GM23248 (cell line): ENCODE measurements at regions of chr10 and their contacts with region 1.

Region 1: DNA sequence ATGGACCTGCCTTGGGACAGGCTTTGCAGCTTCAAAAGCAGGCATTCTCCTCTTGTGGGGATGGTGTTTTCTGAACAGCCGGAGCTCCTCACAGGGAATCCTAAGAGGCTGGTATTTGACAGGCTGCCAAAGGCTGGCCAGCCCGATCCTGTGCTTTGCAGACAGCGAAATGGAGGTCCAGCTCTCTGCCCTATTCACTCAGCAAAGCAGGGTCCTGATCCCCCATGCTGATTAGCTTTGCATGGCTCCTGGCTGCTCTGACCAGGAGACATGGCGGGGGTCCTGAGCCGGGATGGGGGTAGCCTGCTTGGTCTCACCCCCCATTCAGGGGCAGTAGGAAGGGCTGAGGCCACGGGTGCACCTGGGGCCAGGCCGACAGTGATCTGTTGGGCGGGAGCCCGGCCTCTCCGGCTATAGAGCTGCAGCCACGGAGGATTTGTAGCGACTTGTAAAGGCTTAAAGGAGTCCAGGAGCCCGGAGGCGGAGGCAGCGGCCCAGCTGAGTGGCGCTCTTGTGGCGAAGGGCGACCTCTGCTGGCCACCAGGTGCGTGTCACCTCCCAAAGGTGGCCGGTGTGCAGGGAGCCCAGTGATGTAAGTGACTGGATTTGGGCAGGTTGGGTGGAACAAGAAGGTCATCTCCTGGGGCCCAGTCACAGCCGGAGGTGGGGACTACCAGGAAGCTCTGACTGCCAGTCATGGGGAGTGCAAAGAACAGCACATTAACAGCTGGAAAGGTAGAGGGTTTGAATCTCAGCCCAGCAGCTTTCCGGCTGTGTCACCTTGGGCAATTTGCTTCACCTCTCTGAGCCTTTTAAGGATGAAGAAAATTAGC is 126.5 kb downstream of the ZMIZ1 start:
- DNase-seq: peak; percentile 91
- H3K4me3 ChIP-seq: no peak overlapping the region
- H3K27ac ChIP-seq: peak overlapping the region; percentile 53
- H3K4me1 ChIP-seq: peaks cover 34% of the 10 kb centered on the region
- H3K27me3 ChIP-seq: no peaks in the 10 kb centered on the region

Region 2: DNA sequence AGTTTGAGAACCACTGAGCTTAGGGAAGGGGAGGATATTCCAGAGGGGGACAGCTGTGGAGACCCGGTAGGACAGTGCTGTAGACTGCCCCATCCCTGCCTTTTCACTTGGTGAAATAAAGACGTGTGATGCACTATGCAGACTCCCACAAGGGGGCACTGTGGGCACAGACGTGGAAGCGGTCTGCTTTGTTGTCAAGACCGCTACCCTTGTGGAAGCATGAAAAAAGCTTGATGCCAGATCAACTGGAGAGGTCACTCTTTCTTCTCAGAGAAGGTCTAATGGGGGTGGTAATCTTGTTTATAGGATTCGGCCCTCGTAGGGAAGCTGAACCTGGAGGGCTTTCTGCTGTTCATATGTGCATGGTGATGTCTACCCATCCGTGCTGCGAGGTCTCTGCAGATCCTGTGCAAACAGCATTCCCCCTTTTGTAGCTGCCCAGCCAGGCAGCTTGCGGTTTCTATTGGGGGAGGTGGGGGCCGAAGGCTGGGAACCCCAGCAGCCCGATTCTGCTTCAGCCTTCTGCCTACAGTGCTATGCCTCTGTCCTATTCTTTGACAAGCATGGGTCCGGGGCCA is 1147.9 kb before region 1 on chr10:
- in situ Hi-C with region 1: loop called (anchors 10 kb)
- DNase-seq: peak; percentile 87
- H3K4me3 ChIP-seq: no peak overlapping the region
- H3K27ac ChIP-seq: no peak overlapping the region
- H3K4me1 ChIP-seq: peaks cover 24% of the 10 kb centered on the region
- H3K27me3 ChIP-seq: no peaks in the 10 kb centered on the region

Region 3: GRCh38 chr10:78727728-78728127 is 467.6 kb before region 1 on chr10:
- in situ Hi-C with region 1: no loop called
- DNase-seq: no peak
- H3K4me3 ChIP-seq: no peak overlapping the region
- H3K27ac ChIP-seq: no peak overlapping the region
- H3K4me1 ChIP-seq: no peaks in the 10 kb centered on the region
- H3K27me3 ChIP-seq: peaks cover 16% of the 10 kb centered on the region

Region 4: GRCh38 chr10:79069325-79070080 is 125.8 kb before region 1 on chr10:
- in situ Hi-C with region 1: loop called (anchors 10 kb)
- DNase-seq: peak; percentile 75
- H3K4me3 ChIP-seq: peak overlapping the region; percentile 99
- H3K27ac ChIP-seq: peak overlapping the region; percentile 92
- H3K4me1 ChIP-seq: peaks cover 24% of the 10 kb centered on the region
- H3K27me3 ChIP-seq: no peaks in the 10 kb centered on the region

Region 5: DNA sequence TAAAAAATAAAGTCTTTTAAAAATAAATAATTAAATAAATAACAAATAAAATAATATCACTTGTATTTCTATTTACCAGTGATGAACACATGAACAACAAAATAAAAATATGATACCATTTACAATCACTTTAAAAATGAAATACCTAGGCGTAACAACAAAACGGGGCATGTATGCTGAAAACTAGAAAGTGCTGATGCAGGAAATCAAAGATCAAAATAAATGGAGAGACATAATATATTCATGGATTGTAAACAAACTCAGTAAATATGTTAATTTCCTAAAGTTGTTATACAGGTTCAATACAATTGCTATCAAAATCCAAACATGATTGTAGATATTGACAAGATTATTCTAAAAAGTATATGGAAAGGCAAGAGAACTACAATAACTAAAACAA is 384.1 kb after region 1 on chr10:
- in situ Hi-C with region 1: no loop called
- DNase-seq: no peak
- H3K4me3 ChIP-seq: no peak overlapping the region
- H3K27ac ChIP-seq: no peak overlapping the region
- H3K4me1 ChIP-seq: no peaks in the 10 kb centered on the region
- H3K27me3 ChIP-seq: peaks cover 26% of the 10 kb centered on the region